Heart left ventricle (tissue), 16 donors: ENCODE measurements at regions of chr2 and their contacts with region 1.

Region 1: DNA sequence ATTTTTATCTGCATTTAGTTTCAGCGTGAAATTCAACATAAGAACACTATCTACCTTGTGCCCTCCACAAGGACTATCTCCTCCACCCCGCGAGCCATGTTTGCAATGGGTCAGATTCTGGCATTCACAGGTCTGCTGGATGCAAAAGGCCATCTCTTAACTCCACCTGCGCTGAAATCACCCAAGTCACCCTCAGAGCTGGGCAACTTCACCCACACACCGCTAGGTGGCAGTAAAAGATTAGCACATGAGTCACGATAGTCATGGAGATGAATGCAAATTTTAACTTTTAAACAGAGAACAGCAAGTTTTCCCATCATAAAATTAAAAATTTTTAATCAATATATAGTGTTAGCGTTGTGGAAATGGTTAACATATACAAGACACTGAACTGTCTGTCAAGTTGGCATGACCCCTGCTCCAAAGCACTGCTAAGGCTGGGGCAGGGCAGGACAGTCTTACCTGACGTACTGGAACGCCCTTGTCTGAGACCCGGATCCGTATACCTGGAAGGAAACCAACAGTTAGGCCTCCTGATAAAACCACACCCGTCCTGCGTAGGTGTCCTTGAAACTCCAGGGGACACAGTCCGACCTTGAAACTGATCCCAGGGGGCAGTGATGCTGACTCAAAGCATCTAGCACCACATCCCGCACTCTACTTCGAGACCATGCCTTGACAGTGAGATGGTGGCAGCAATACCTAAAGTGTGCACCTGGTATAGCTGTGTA is 89.6 kb downstream of the UXS1 start:
- DNase-seq: peak in 2 of 5 donors; percentile 42 to 49
- ATAC-seq: peak in 3 of 4 donors; percentile 35 to 47 (median 38)
- H3K4me3 ChIP-seq: no peak overlapping the region
- H3K27ac ChIP-seq: no peak overlapping the region
- H3K4me1 ChIP-seq: peaks cover 0 to 21% (median 12%) of the 10 kb centered on the region in 12 donors
- H3K27me3 ChIP-seq: no peaks in the 10 kb centered on the region
- CTCF ChIP-seq: peak; percentile 78 to 98 (median 96)
- POLR2A ChIP-seq: no peak

Region 2: DNA sequence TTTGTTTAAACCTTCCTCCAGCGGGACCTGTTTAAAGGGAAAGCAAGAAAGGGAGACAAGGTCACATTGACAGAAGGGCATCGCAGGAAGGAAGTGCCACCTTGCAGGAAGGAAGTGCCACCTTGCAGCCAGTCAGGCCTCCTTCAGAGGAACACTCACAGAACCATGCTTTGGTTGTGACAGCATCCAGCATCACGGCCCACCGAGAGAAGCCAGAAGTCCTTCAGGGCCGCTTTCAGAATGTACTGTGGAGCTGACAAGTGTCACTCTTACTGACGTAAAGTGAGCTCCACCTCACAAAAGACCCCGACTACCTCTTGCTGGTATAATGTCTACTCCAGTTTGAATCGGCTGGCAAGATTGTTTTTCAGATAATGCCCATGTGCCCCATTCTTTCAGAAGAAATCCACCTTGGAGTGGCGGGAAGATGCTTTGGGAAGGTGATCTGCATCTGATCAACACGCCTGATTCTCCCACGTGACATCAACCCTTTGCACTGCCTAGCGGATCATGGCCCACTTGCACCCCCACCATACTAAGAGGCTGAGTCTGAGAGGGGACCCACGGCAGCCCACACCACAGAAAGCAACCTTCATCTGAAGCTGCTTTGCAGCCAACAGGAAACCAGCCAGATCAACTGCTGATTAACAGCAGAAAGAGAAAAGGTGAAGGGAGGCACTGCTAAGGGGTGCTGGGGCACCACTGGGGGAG is 10.2 kb before region 1 on chr2:
- intact Hi-C with region 1: no loop called
- DNase-seq: no peak
- ATAC-seq: no peak
- H3K4me3 ChIP-seq: no peak overlapping the region
- H3K27ac ChIP-seq: peak overlapping the region in 1 of 12 donors; percentile 76
- H3K4me1 ChIP-seq: peaks cover 0 to 11% (median 0%) of the 10 kb centered on the region in 12 donors
- H3K27me3 ChIP-seq: no peaks in the 10 kb centered on the region
- CTCF ChIP-seq: no peak
- POLR2A ChIP-seq: no peak

Region 3: GRCh38 chr2:106193977-106194778 is 89.7 kb after region 1 on chr2 and contains the start of gene UXS1:
- intact Hi-C with region 1: loop called in 3 of 10 experiments (anchors 5 to 10 kb)
- DNase-seq: peak; percentile 97 to 99 (median 98)
- ATAC-seq: peak; percentile 94 to 98 (median 96)
- H3K4me3 ChIP-seq: peak within 1 kb of the TSS; percentile 83 to 98 (median 92)
- H3K27ac ChIP-seq: peak within 1 kb of the TSS; percentile 43 to 96 (median 88)
- H3K4me1 ChIP-seq: peaks cover 0 to 39% (median 13%) of the 10 kb centered on the region in 12 donors
- H3K27me3 ChIP-seq: no peaks in the 10 kb centered on the region
- CTCF ChIP-seq: peak in 1 of 12 donors; percentile 4
- POLR2A ChIP-seq: peak in 1 of 2 donors; percentile 73
- total RNA-seq, gene UXS1: 20.7 to 36.9 (median 30.9) TPM

Region 4: GRCh38 chr2:106232638-106233349 is 128.3 kb after region 1 on chr2:
- intact Hi-C with region 1: loop called in 1 of 10 experiments (anchors 10 kb)
- DNase-seq: peak in 4 of 5 donors; percentile 51 to 78 (median 63)
- ATAC-seq: peak; percentile 96 to 99 (median 98)
- H3K4me3 ChIP-seq: no peak overlapping the region
- H3K27ac ChIP-seq: peak overlapping the region in 1 of 12 donors; percentile 30
- H3K4me1 ChIP-seq: peaks cover 0 to 3% (median 0%) of the 10 kb centered on the region in 12 donors
- H3K27me3 ChIP-seq: no peaks in the 10 kb centered on the region
- CTCF ChIP-seq: no peak
- POLR2A ChIP-seq: no peak

Region 5: GRCh38 chr2:106542811-106543259 is 438.3 kb after region 1 on chr2:
- intact Hi-C with region 1: loop called in 9 of 10 experiments (anchors 1 to 5 kb)
- DNase-seq: peak; percentile 45 to 71 (median 61)
- ATAC-seq: peak; percentile 58 to 88 (median 80)
- H3K4me3 ChIP-seq: peak overlapping the region in 9 of 12 donors; percentile 18 to 38 (median 29)
- H3K27ac ChIP-seq: no peak overlapping the region
- H3K4me1 ChIP-seq: peaks cover 0 to 22% (median 0%) of the 10 kb centered on the region in 12 donors
- H3K27me3 ChIP-seq: peaks cover 0 to 23% (median 4%) of the 10 kb centered on the region in 9 donors
- CTCF ChIP-seq: peak; percentile 83 to 98 (median 92)
- POLR2A ChIP-seq: no peak

Region 6: GRCh38 chr2:106582148-106583143 is 477.9 kb after region 1 on chr2:
- intact Hi-C with region 1: loop called in 8 of 10 experiments (anchors 2 to 10 kb)
- DNase-seq: peak; percentile 67 to 77 (median 70)
- ATAC-seq: peak; percentile 70 to 86 (median 80)
- H3K4me3 ChIP-seq: peak overlapping the region in 11 of 12 donors; percentile 11 to 49 (median 37)
- H3K27ac ChIP-seq: no peak overlapping the region
- H3K4me1 ChIP-seq: peaks cover 0 to 11% (median 6%) of the 10 kb centered on the region in 12 donors
- H3K27me3 ChIP-seq: peaks cover 2 to 32% (median 13%) of the 10 kb centered on the region in 9 donors
- CTCF ChIP-seq: peak; percentile 65 to 91 (median 84)
- POLR2A ChIP-seq: no peak